IMR-90 (cell line): ENCODE measurements at regions of chr7 and their contacts with region 1.

Region 1: GRCh38 chr7:23234569-23235296 is 11.8 kb upstream of the GPNMB start:
- DNase-seq: no peak
- ATAC-seq: no peak
- H3K4me3 ChIP-seq: no peak overlapping the region
- H3K27ac ChIP-seq: no peak overlapping the region
- H3K4me1 ChIP-seq: no peaks in the 10 kb centered on the region
- H3K27me3 ChIP-seq: peaks cover 5% of the 10 kb centered on the region
- CTCF ChIP-seq: no peak
- POLR2A ChIP-seq: no peak
- RAD21 ChIP-seq: no peak

Region 2: DNA sequence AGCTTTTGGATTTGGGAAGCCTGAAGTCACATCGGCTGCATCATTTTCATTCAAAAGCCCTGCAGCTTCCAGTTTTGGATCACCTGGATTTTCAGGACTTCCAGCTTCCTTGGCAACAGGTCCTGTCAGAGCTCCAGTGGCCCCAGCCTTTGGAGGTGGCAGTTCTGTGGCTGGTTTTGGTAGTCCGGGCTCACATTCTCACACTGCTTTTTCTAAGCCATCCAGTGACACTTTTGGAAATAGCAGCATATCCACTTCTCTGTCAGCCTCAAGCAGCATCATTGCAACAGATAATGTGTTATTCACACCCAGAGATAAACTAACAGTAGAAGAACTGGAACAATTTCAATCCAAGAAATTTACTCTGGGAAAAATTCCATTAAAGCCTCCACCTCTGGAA is 34.4 kb before region 1 on chr7:
- CTCF ChIA-PET with region 1: no interaction called
- POLR2A ChIA-PET with region 1: no interaction called
- dilution Hi-C with region 1: no loop called
- in situ Hi-C with region 1: no loop called
- intact Hi-C with region 1: loop called (anchors 5 kb)
- DNase-seq: no peak
- ATAC-seq: no peak
- H3K4me3 ChIP-seq: no peak overlapping the region
- H3K27ac ChIP-seq: no peak overlapping the region
- H3K4me1 ChIP-seq: peaks cover 2% of the 10 kb centered on the region; the same call in 1 of the 2 replicates
- H3K27me3 ChIP-seq: no peaks in the 10 kb centered on the region
- CTCF ChIP-seq: no peak
- POLR2A ChIP-seq: no peak
- RAD21 ChIP-seq: no peak

Region 3: GRCh38 chr7:23287612-23288011 is 52.9 kb after region 1 on chr7:
- CTCF ChIA-PET with region 1: no interaction called
- POLR2A ChIA-PET with region 1: no interaction called
- dilution Hi-C with region 1: no loop called
- in situ Hi-C with region 1: no loop called
- intact Hi-C with region 1: no loop called
- DNase-seq: no peak
- ATAC-seq: no peak
- H3K4me3 ChIP-seq: no peak overlapping the region
- H3K27ac ChIP-seq: no peak overlapping the region
- H3K4me1 ChIP-seq: no peaks in the 10 kb centered on the region
- H3K27me3 ChIP-seq: no peaks in the 10 kb centered on the region
- CTCF ChIP-seq: no peak
- POLR2A ChIP-seq: no peak
- RAD21 ChIP-seq: no peak

Region 4: GRCh38 chr7:23418046-23418445 is 183.3 kb after region 1 on chr7:
- CTCF ChIA-PET with region 1: no interaction called
- POLR2A ChIA-PET with region 1: no interaction called
- dilution Hi-C with region 1: no loop called
- in situ Hi-C with region 1: no loop called
- intact Hi-C with region 1: no loop called
- DNase-seq: peak; percentile 66
- ATAC-seq: peak; percentile 66
- H3K4me3 ChIP-seq: no peak overlapping the region
- H3K27ac ChIP-seq: no peak overlapping the region
- H3K4me1 ChIP-seq: no peaks in the 10 kb centered on the region; the same call in 1 of the 2 replicates
- H3K27me3 ChIP-seq: no peaks in the 10 kb centered on the region
- CTCF ChIP-seq: 0 out of 2 replicates have a peak, but pooled peaks have one; percentile 1
- POLR2A ChIP-seq: no peak
- RAD21 ChIP-seq: no peak